ENCODE measurements at regions of chr1 and their contacts with region 1.

Region 1: DNA sequence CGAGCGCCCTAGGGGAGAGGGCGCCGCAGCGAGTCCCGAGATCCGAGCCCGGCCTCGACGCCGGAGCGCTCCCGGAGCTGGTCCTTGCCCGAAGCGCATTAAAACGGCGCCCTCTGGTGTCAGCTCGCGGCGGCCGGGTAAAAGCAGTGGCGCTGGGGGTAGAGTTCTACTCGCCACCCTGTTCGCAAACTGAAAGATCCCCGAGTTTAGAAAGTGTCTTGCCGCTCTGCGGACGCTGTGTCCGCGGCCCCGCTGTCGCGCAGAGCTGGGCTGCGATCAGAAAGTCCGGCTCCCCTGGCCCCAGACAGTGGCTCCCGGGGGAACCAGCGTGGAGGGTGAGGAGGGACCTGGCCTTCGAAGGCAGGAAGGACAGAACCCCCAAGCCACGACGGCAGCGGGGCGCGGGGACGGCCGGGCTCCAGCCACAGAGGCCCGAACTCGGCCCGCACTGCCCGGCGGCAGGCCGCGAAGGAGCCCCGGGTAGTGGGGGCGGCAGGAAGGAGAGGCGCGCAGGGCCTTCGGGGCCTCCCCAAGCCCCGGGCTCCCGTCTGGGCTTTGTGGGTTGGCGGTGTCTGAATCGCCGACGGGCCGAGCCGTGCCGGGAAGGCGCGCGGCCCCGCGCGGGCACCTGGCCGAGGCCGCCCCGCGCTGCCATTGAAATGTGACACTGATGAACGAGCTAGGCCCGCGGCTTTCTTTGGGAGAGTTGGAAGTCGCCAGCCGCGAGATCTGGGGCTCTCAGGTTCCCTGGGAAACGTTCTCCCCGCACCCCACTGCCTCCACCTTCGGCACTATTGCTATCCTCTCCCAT is 39.1 kb upstream of the NFIA start:
- DNase-seq: peak; percentile 96
- H3K4me3 ChIP-seq: peak overlapping the region; percentile 61 to 71 (median 68)
- H3K27ac ChIP-seq: peak overlapping the region; percentile 80 to 84 (median 83)
- H3K4me1 ChIP-seq: peaks cover 8 to 12% (median 11%) of the 10 kb centered on the region in 4 donors
- H3K27me3 ChIP-seq: peaks cover 0 to 4% (median 0%) of the 10 kb centered on the region in 4 donors
- CTCF ChIP-seq: peak; percentile 83 to 97 (median 91)
- EP300 ChIP-seq: no peak
- POLR2A ChIP-seq: no peak

Region 2: DNA sequence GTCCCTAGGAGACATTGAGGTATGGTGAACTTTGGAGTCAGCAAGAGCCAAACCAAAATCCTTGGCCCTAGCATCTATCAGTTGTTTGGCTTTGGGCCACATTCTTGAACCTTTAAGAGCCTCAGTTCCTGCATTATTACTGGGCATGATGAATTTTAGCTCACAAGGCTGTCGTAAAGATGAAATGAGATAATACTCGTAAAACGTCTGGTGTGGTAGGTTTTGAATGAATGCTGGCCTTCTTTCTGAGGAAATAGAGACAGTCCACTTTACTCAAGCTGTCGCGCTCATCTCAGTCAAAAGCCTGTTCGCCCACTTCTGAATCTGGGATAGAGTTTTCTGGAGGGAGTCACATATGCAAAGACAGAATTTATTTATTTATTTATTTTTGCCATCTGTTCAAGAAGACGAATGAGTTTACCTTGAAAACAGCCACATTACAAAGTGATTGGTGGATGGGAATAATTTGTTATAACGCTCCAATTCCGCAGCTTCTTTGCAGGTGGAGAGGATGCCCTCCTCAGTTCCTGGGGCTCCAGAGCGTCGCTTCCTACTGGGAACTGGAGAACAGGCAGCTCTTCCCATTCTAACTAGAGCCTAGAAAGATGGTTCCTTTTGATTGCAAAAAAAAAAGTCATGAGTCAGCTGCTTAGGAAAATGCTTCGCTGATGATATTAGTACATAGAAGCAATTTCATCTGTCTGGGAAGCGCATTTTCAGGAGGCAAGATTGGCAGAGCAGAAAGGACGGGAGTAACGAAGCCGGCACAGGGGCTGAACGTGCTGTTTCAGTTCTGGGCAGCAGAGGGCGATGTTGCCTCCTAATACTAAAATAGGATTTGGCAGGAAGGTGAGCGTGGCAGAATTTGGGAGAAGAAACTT is 1066.8 kb before region 1 on chr1:
- intact Hi-C with region 1: loop called (anchors 5 kb)
- DNase-seq: no peak
- H3K4me3 ChIP-seq: peak overlapping the region in 1 of 4 donors; percentile 22
- H3K27ac ChIP-seq: no peak overlapping the region
- H3K4me1 ChIP-seq: peaks cover 2 to 11% (median 7%) of the 10 kb centered on the region in 4 donors
- H3K27me3 ChIP-seq: peaks cover 0 to 6% (median 0%) of the 10 kb centered on the region in 4 donors
- CTCF ChIP-seq: peak; percentile 81 to 92 (median 89)
- EP300 ChIP-seq: no peak
- POLR2A ChIP-seq: no peak

Region 3: DNA sequence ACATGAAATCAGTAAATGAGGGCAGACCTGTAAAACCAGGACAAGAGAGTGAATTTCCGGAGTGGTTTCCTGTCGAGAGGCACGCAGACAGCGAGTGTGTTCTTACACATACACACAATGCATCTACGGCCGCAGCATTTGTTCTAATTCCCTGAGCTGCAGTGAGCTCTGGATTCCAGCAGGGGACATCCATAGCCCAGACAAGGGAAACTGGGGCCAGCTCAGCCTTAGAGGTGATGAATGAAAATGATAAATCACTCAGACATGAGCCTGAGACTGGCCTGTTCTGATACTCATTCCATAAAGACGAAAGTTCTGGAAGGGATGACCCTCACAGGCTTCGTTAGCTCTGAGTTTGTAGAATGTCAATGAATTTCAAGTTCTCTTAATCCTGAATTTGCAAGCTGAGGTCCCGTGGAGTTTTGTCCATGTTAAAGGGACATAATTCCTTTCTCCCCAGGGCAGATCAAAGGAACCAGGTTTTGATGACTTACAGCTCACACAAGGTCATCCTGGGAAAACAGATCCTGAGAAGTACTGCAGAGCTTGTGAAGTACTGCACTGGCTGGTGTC is 761.8 kb before region 1 on chr1:
- intact Hi-C with region 1: loop called (anchors 5 kb)
- DNase-seq: no peak
- H3K4me3 ChIP-seq: no peak overlapping the region
- H3K27ac ChIP-seq: no peak overlapping the region
- H3K4me1 ChIP-seq: peaks cover 0 to 18% (median 12%) of the 10 kb centered on the region in 4 donors
- H3K27me3 ChIP-seq: no peaks in the 10 kb centered on the region
- CTCF ChIP-seq: peak; percentile 81 to 95 (median 82)
- EP300 ChIP-seq: no peak
- POLR2A ChIP-seq: no peak

Region 4: GRCh38 chr1:60848583-60849188 is 194.5 kb before region 1 on chr1:
- intact Hi-C with region 1: loop called (anchors 2 kb)
- DNase-seq: no peak
- H3K4me3 ChIP-seq: no peak overlapping the region
- H3K27ac ChIP-seq: no peak overlapping the region
- H3K4me1 ChIP-seq: no peaks in the 10 kb centered on the region
- H3K27me3 ChIP-seq: no peaks in the 10 kb centered on the region
- CTCF ChIP-seq: peak; percentile 18 to 44 (median 44)
- EP300 ChIP-seq: no peak
- POLR2A ChIP-seq: no peak

Region 5: DNA sequence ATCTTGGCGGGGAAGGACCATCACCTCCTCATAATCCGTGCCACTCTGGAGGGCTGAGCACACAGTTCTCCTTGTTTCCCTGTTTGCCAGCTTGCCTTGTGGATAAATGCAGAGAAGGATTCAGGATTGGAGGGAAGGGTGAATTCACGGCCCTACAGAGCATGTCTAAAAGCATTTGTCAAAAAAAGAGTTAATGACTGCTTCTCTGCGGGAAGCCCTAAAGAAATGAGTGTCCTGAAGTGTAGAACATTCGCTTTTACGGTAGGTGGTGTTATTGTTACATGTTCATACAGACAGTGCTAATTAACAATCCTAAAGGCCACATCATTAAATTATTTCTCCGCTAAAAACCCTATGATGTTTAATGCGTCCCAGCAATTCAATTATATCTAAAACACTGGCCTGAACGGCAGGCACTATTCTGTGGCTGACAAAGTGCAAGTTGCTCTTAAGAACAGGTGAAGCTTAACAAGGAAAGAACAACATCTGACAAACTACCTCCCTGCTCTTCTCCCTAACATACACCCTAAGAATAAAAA is 73.2 kb before region 1 on chr1:
- intact Hi-C with region 1: loop called (anchors 5 kb)
- DNase-seq: no peak
- H3K4me3 ChIP-seq: no peak overlapping the region
- H3K27ac ChIP-seq: peak overlapping the region in 3 of 4 donors; percentile 15 to 48 (median 39)
- H3K4me1 ChIP-seq: peaks cover 0 to 19% (median 14%) of the 10 kb centered on the region in 4 donors
- H3K27me3 ChIP-seq: no peaks in the 10 kb centered on the region
- CTCF ChIP-seq: peak; percentile 52 to 63 (median 60)
- EP300 ChIP-seq: no peak
- POLR2A ChIP-seq: no peak

Region 6: DNA sequence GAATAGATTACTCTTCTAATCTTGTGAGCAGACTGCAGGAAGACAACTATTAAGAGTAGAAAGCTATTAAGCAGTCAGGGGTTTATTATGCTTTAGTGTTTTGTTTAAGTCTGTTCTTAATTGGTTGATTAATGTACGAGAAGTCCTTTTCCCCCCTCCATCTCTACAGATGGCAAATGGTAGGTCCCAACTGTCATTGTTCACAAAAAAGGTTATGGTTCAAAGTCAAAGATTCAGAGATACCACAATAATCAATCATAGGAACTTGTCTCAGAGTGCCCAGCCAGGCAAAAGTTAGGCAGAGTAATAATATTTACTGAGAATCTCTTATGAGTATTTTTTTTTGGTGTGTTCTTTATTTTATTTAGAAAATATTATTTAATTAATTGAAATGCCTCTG is 65.9 kb after region 1 on chr1:
- intact Hi-C with region 1: no loop called
- DNase-seq: no peak
- H3K4me3 ChIP-seq: no peak overlapping the region
- H3K27ac ChIP-seq: no peak overlapping the region
- H3K4me1 ChIP-seq: peaks cover 28 to 55% (median 49%) of the 10 kb centered on the region in 4 donors
- H3K27me3 ChIP-seq: no peaks in the 10 kb centered on the region
- CTCF ChIP-seq: no peak
- EP300 ChIP-seq: no peak
- POLR2A ChIP-seq: no peak

Region 7: DNA sequence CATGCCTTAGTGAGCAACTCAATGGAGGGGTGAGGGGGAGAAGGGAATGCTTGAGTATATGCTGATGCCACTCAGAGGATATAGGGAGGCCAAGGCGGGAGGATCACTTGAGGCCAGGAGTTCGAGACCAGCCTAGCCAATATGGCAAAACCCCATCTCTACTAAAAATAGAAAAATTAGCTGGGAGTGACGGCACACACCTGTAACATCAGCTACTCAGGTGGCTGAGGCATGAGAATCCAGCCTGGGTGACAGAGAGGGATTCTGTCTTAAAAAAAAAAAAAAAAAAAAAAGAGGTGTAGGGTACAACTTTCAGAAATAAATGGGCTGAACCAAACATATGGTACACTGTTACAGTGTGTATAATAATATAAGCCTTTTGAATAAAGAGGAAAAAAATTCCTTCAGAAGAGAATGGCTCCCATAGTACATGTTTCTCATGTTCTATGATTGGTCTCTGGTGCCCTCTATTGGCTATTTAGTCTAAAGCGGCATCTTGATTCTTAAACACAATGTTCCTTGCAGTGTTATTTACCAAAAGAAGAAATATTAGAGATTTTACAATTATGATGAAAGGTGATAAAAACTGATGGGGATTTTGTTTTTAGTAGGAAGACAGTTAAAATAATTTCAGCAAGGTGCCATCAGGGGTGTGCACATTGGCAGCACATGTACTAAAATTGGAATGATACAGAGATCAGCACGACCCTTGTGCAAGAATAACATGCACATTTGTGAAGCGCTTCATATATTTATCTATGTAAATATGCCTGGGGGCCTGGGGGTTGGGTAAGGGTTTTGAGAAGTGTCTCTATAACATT is 808.8 kb after region 1 on chr1:
- intact Hi-C with region 1: loop called (anchors 5 kb)
- DNase-seq: no peak
- H3K4me3 ChIP-seq: no peak overlapping the region
- H3K27ac ChIP-seq: no peak overlapping the region
- H3K4me1 ChIP-seq: peaks cover 0 to 12% (median 11%) of the 10 kb centered on the region in 4 donors
- H3K27me3 ChIP-seq: no peaks in the 10 kb centered on the region
- CTCF ChIP-seq: peak; percentile 60 to 73 (median 68)
- EP300 ChIP-seq: no peak
- POLR2A ChIP-seq: no peak